ENCODE measurements at regions of chr1 and their contacts with region 1.

Region 1: GRCh38 chr1:233304489-233305102 is 9.1 kb upstream of the PCNX2 start:
- DNase-seq: peak; percentile 55
- H3K4me3 ChIP-seq: no peak overlapping the region
- H3K27ac ChIP-seq: no peak overlapping the region
- H3K4me1 ChIP-seq: no peaks in the 10 kb centered on the region
- CTCF ChIP-seq: peak; percentile 89

Region 2: GRCh38 chr1:233315718-233316301 is 11.2 kb after region 1 on chr1:
- CTCF ChIA-PET with region 1: no interaction called
- POLR2A ChIA-PET with region 1: no interaction called
- intact Hi-C with region 1: no loop called
- DNase-seq: no peak
- H3K4me3 ChIP-seq: no peak overlapping the region
- H3K27ac ChIP-seq: no peak overlapping the region
- H3K4me1 ChIP-seq: peaks cover 7% of the 10 kb centered on the region
- CTCF ChIP-seq: no peak

Region 3: GRCh38 chr1:233364695-233365539 is 60.3 kb after region 1 on chr1:
- CTCF ChIA-PET with region 1: no interaction called
- POLR2A ChIA-PET with region 1: interaction called, 4 read pairs
- intact Hi-C with region 1: loop called (anchors 2 kb)
- DNase-seq: peak; percentile 12
- H3K4me3 ChIP-seq: no peak overlapping the region
- H3K27ac ChIP-seq: no peak overlapping the region
- H3K4me1 ChIP-seq: no peaks in the 10 kb centered on the region
- CTCF ChIP-seq: peak; percentile 86

Region 4: GRCh38 chr1:233394860-233395717 is 90.5 kb after region 1 on chr1:
- CTCF ChIA-PET with region 1: no interaction called
- POLR2A ChIA-PET with region 1: no interaction called
- intact Hi-C with region 1: loop called (anchors 5 kb)
- DNase-seq: peak; percentile 50
- H3K4me3 ChIP-seq: no peak overlapping the region
- H3K27ac ChIP-seq: no peak overlapping the region
- H3K4me1 ChIP-seq: no peaks in the 10 kb centered on the region
- CTCF ChIP-seq: peak; percentile 93

Region 5: GRCh38 chr1:233790662-233791375 is 486.2 kb after region 1 on chr1:
- CTCF ChIA-PET with region 1: no interaction called
- POLR2A ChIA-PET with region 1: no interaction called
- intact Hi-C with region 1: loop called (anchors 1 kb)
- DNase-seq: peak; percentile 52
- H3K4me3 ChIP-seq: no peak overlapping the region
- H3K27ac ChIP-seq: no peak overlapping the region
- H3K4me1 ChIP-seq: no peaks in the 10 kb centered on the region
- CTCF ChIP-seq: peak; percentile 92

Region 6: GRCh38 chr1:234065794-234066447 is 761.3 kb after region 1 on chr1:
- CTCF ChIA-PET with region 1: no interaction called
- POLR2A ChIA-PET with region 1: no interaction called
- intact Hi-C with region 1: loop called (anchors 5 kb)
- DNase-seq: peak; percentile 59
- H3K4me3 ChIP-seq: no peak overlapping the region
- H3K27ac ChIP-seq: no peak overlapping the region
- H3K4me1 ChIP-seq: no peaks in the 10 kb centered on the region
- CTCF ChIP-seq: peak; percentile 93